ENCODE measurements at regions of chr2 and their contacts with region 1.

Region 1: DNA sequence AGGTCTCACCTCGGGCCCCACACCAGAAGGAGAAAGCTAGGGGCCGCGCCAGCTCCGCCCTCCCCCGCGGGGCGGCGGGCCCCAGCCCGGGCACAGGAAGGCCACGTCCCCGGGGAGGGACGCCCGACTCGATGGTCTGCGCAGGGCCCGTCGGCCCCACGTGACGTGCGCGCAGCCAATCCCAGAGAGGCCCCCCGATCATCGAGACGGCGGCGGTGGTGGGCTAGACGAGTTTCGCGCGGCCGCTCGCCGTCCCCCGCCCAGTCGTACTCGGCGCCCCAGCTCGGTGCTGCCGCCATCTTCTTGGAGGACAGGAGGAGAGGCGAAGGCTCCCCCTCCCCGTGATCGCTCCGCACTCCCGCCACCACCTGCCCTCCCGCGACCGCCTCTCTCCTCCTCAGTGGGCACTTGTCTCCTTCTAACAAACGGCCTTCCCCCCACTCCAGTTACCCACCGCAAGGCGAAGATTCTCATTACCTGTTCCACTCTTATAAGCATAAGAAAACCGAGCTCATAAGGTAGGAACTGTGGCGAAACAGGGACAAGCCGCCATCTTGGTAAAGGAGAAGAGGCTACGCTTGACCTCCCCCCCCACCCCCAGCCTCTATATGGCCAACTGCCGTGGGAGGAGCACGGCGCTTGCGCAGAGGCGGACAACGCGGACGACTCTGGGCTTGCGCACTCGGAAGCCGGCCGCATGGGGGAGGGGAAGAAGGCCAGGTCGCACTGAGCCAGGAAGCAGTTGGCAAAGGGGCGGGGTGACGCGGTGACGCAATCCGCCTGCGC is at the start of gene HDLBP:
- DNase-seq: peak; percentile 100
- total RNA-seq, gene HDLBP: 356 TPM

Region 2: DNA sequence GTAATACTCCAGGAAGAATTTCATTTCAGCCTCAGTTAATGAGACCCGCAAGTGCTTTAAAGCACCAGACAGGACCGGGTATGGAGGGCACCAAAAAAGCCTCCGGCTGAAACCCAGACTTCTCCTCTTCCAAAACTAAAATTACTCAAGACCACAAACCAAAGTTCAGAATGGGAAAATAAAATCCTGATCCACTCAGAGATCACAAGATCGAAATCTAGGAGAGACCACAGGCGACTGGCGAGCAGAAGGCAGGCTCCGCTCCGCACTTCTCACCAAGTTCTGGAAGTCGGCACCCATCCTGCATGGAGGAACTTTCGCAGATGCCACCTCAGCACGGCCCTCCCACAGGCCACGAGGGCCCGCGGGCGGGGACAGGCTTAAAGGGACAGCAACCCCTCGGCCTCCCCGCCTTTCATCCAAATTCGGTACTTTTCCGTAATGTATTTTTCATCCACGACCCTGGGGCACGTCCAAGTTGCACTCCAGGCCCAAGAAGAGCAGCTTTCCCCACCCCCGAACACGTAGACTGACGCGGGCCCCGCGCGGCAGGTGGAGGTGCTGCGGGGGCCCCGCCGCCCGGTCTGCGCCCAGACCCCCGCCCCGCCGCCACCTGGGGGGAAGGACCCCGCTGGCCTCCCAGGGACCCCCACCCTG is 43.5 kb before region 1 on chr2:
- intact Hi-C with region 1: loop called (anchors 2 kb)
- DNase-seq: peak; percentile 94

Region 3: GRCh38 chr2:241355983-241356870 is 40.9 kb after region 1 on chr2 and contains the start of gene FARP2:
- intact Hi-C with region 1: loop called (anchors 2 kb)
- DNase-seq: peak; percentile 99
- total RNA-seq, gene FARP2: 24.4 TPM

Measured in cardiac septum (tissue), 1 donor.